ENCODE measurements at regions of chr17 and their contacts with region 1.

Region 1: DNA sequence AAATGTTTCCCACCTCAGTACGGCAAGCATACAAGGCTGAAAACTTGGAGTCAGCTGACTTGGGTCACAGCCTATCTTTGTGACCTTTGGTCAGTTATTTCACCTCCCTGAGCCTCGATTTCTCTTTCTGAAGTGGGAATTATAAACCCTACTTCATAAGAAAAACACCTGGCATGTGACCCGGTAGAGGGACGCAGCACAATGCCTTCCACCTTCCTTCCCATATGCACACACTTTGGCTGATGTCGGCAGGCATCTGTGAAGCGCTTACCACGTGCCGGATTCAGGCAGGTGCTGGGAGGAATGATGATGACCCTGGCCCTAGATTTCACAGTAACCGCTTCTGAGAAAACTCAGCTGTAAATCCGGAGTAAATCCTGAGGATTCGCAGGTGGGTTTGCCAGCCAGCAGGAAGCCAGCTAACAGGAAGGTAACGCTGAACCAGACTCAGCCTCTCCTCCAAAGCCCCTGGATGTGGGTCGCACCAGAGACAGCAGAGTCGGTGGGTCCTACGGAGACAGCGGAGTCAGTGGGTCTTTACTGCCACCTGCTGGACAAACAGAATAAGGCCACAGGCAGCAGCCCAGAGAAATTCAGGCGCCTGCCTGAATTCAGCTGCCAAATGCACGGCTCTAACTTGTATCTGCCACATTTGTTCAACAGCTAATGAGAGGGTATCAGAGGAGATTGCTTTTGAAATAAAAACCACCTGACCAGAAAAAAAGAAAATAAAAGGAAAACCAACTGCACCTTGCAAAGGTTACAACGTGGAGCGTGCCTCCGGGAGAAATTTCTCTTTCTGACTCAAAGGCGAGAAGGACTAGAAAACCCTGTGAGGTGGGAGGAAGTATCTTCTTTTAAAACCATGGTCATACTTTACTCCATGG is 16.6 kb downstream of the COPRS start:
- DNase-seq: peak; percentile 75 to 78
- H3K4me3 ChIP-seq: peak overlapping the region in 1 of 2 donors; percentile 6
- H3K27ac ChIP-seq: peak overlapping the region; percentile 57 to 76
- H3K4me1 ChIP-seq: peaks cover 0 to 9% of the 10 kb centered on the region in 2 donors
- H3K27me3 ChIP-seq: no peaks in the 10 kb centered on the region
- CTCF ChIP-seq: peak; percentile 94 to 98 (median 96)
- POLR2A ChIP-seq: peak in 1 of 2 donors; percentile 23

Region 2: DNA sequence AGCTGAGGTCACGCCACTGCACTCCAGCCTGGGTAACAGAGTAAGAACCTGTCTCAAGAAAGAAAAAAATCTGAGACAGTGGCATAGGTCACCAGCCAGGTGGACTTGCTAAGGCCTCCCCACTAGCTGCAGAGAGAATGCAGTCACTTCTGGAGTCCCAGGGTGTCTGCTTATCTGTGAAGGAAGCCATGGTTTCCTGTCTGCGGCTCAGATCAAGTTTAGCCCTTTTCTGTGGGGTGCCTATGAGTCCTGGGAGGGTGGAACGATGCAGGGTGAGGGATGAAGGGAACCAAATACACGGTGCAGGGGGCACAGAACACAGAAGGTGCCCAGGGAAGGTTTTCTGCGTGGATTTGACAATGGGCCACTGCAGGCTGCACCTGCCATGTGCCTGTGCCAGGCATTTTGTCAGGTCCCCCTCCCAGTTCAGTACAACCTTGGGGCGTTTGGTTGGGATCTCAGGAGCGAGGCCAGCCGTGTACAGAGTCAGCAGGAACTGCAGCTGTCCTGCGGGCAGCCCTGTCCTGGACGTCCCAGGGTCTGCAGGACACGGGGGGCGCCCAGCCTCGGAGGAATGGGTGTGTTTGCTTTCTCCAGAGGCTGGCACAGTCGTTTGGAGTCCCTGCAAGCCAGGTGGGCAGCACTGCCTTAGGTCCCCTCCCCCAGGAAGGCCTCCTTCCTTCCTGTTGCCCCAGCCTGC is 409.2 kb before region 1 on chr17:
- intact Hi-C with region 1: loop called (anchors 5 kb)
- DNase-seq: no peak
- H3K4me3 ChIP-seq: no peak overlapping the region
- H3K27ac ChIP-seq: no peak overlapping the region
- H3K4me1 ChIP-seq: no peaks in the 10 kb centered on the region
- H3K27me3 ChIP-seq: no peaks in the 10 kb centered on the region
- CTCF ChIP-seq: no peak
- POLR2A ChIP-seq: no peak

Region 3: GRCh38 chr17:31558748-31559644 is 283.4 kb before region 1 on chr17:
- intact Hi-C with region 1: loop called (anchors 5 kb)
- DNase-seq: peak; percentile 82 to 83
- H3K4me3 ChIP-seq: peak overlapping the region; percentile 58 to 70
- H3K27ac ChIP-seq: peak overlapping the region; percentile 84 to 91
- H3K4me1 ChIP-seq: no peaks in the 10 kb centered on the region
- H3K27me3 ChIP-seq: no peaks in the 10 kb centered on the region
- CTCF ChIP-seq: peak; percentile 84 to 96 (median 94)
- POLR2A ChIP-seq: peak; percentile 60 to 63

Region 4: DNA sequence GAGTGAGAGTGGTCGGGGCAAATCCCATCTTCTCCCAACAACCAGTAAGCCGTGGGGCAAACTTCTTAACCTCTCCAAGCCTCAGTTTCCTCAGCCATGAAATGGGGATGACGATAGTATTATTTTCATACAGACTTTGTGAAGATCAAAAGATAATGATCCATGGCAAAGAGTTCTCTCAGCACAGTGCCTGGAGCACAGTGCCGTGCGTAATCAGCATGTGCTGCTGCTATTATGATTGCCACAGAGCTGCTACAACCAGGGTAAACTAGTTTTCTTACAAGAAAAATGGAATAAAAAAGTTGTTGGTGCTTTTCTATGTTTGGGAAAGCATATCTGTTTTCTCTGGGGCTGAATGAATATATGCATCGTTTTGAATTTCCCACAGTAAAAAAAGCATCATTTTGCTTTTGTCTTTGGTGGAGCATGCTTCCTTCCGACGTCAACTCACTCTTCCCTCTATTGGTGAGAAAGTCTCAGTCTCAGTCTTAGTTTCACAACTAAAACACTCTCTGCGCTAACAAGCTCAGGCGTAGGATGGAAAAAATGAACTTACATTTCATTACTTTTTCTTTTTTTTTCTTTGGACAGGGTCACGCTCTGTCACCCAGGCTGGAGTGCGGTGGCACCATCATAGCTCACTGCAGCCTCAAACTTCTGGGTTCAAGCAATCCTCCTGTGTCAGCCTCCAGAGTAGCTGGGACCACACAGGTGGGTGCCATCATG is 681.6 kb after region 1 on chr17:
- intact Hi-C with region 1: no loop called
- DNase-seq: no peak
- H3K4me3 ChIP-seq: no peak overlapping the region
- H3K27ac ChIP-seq: no peak overlapping the region
- H3K4me1 ChIP-seq: no peaks in the 10 kb centered on the region
- H3K27me3 ChIP-seq: no peaks in the 10 kb centered on the region
- CTCF ChIP-seq: no peak
- POLR2A ChIP-seq: no peak

Measured in uterus (tissue), 4 donors.